CD8-positive, alpha-beta T cell (primary cell): ENCODE measurements at regions of chr12 and their contacts with region 1.

Region 1: GRCh38 chr12:569803-570434 is 93.3 kb downstream of the NINJ2 start:
- DNase-seq: peak; percentile 74 to 93 (median 87)
- ATAC-seq: peak; percentile 98
- H3K4me3 ChIP-seq: peak overlapping the region; percentile 63 to 76
- H3K4me3 Mint-ChIP-seq: peak overlapping the region; percentile 86
- H3K27ac ChIP-seq: peak overlapping the region in 1 of 2 experiments; percentile 8
- H3K27ac Mint-ChIP-seq: peak overlapping the region; percentile 77
- H3K4me1 ChIP-seq: peaks cover 43% of the 10 kb centered on the region
- H3K4me1 Mint-ChIP-seq: peaks cover 45% of the 10 kb centered on the region
- H3K27me3 ChIP-seq: no peaks in the 10 kb centered on the region
- H3K27me3 Mint-ChIP-seq: no peaks in the 10 kb centered on the region
- CTCF ChIP-seq: peak; percentile 88

Region 2: GRCh38 chr12:106118-106591 is 463.8 kb before region 1 on chr12:
- CTCF ChIA-PET with region 1: no interaction called
- POLR2A ChIA-PET with region 1: no interaction called
- intact Hi-C with region 1: no loop called
- DNase-seq: no peak
- ATAC-seq: no peak
- H3K4me3 ChIP-seq: no peak overlapping the region
- H3K4me3 Mint-ChIP-seq: no peak overlapping the region
- H3K27ac ChIP-seq: no peak overlapping the region
- H3K27ac Mint-ChIP-seq: no peak overlapping the region
- H3K4me1 ChIP-seq: peaks cover 16% of the 10 kb centered on the region
- H3K4me1 Mint-ChIP-seq: peaks cover 20% of the 10 kb centered on the region
- H3K27me3 ChIP-seq: no peaks in the 10 kb centered on the region
- H3K27me3 Mint-ChIP-seq: peaks cover 4% of the 10 kb centered on the region
- CTCF ChIP-seq: no peak

Region 3: GRCh38 chr12:823028-823698 is 253.2 kb after region 1 on chr12:
- CTCF ChIA-PET with region 1: interaction called, 107 read pairs
- POLR2A ChIA-PET with region 1: no interaction called
- intact Hi-C with region 1: no loop called
- DNase-seq: no peak
- ATAC-seq: no peak
- H3K4me3 ChIP-seq: no peak overlapping the region
- H3K4me3 Mint-ChIP-seq: no peak overlapping the region
- H3K27ac ChIP-seq: no peak overlapping the region
- H3K27ac Mint-ChIP-seq: peak overlapping the region; percentile 1
- H3K4me1 ChIP-seq: no peaks in the 10 kb centered on the region
- H3K4me1 Mint-ChIP-seq: peaks cover 62% of the 10 kb centered on the region
- H3K27me3 ChIP-seq: no peaks in the 10 kb centered on the region
- H3K27me3 Mint-ChIP-seq: no peaks in the 10 kb centered on the region
- CTCF ChIP-seq: no peak

Region 4: GRCh38 chr12:868722-869121 is 298.8 kb after region 1 on chr12:
- CTCF ChIA-PET with region 1: interaction called, 3 read pairs
- POLR2A ChIA-PET with region 1: no interaction called
- intact Hi-C with region 1: loop called in 1 of 2 experiments (anchors 5 kb)
- DNase-seq: no peak
- ATAC-seq: no peak
- H3K4me3 ChIP-seq: no peak overlapping the region
- H3K4me3 Mint-ChIP-seq: no peak overlapping the region
- H3K27ac ChIP-seq: no peak overlapping the region
- H3K27ac Mint-ChIP-seq: no peak overlapping the region
- H3K4me1 ChIP-seq: peaks cover 10% of the 10 kb centered on the region
- H3K4me1 Mint-ChIP-seq: peaks cover 25% of the 10 kb centered on the region
- H3K27me3 ChIP-seq: no peaks in the 10 kb centered on the region
- H3K27me3 Mint-ChIP-seq: no peaks in the 10 kb centered on the region
- CTCF ChIP-seq: no peak

Region 5: DNA sequence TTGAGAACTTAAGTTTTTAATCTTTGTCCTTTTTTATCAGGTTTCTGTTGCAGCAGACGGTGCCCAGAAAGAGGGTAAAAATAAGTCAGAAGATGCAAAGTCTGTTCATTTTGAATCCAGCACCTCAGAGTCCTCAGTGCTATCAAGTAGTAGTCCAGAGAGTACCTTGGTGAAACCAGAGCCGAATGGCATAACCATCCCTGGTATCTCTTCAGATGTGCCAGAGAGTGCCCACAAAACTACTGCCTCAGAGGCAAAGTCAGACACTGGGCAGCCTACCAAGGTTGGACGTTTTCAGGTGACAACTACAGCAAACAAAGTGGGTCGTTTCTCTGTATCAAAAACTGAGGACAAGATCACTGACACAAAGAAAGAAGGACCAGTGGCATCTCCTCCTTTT is 326.1 kb after region 1 on chr12:
- CTCF ChIA-PET with region 1: no interaction called
- POLR2A ChIA-PET with region 1: no interaction called
- intact Hi-C with region 1: no loop called
- DNase-seq: no peak
- ATAC-seq: no peak
- H3K4me3 ChIP-seq: no peak overlapping the region
- H3K4me3 Mint-ChIP-seq: no peak overlapping the region
- H3K27ac ChIP-seq: no peak overlapping the region
- H3K27ac Mint-ChIP-seq: no peak overlapping the region
- H3K4me1 ChIP-seq: no peaks in the 10 kb centered on the region
- H3K4me1 Mint-ChIP-seq: no peaks in the 10 kb centered on the region
- H3K27me3 ChIP-seq: no peaks in the 10 kb centered on the region
- H3K27me3 Mint-ChIP-seq: no peaks in the 10 kb centered on the region
- CTCF ChIP-seq: no peak